HepG2 (cell line): ENCODE measurements at regions of chr19 and their contacts with region 1.

Region 1: DNA sequence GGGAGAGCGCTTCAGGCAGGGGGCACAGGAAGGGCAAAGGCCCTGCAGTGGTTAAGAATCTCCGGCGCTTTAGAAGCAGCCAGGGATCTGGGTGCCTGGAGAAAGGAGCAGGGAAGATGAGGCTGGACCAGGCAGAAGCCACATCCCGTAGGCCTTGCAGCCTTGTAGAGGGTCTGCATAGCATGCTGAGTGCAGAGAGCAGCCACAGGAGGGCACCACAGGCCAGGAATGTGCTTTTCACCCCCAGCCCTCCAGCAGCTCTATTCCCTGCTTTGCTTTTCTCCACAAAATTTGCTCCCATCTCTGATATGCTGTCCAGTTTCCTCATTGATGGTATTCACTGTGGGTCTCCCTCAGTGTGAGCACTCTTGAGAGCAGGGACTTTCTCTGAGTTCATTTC is 5.7 kb downstream of the WDR62 start:
- DNase-seq: no peak
- ATAC-seq: peak; percentile 73
- H3K4me3 ChIP-seq: no peak overlapping the region
- H3K27ac ChIP-seq: peak overlapping the region; percentile 88
- H3K4me1 ChIP-seq: peaks cover 56% of the 10 kb centered on the region
- H3K27me3 ChIP-seq: no peaks in the 10 kb centered on the region; a peak in 1 of 5 replicates
- CTCF ChIP-seq: peak; percentile 86
- EP300 ChIP-seq: no peak
- POLR2A ChIP-seq: no peak
- RAD21 ChIP-seq: peak; percentile 70

Region 2: DNA sequence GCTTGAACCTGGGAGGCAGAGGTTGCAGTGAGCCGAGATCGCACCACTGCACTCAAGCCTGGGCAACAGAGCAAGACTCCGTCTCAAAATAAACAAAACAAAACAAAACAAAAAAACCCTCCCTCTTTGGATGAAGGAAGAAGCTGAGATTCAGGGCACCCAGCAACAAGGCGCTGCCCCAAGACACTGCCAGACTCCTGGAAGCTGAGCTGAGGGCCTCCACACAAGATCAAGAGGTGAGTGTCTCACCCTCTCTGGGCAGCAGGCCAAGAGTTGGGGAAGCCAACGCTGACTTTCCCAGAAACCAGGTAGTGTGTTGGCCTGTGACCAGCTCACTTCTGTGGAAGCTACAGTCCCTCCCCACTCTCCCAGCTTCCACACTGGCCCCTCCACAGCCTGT is 148.6 kb before region 1 on chr19:
- CTCF ChIA-PET with region 1: no interaction called
- POLR2A ChIA-PET with region 1: no interaction called
- in situ Hi-C with region 1: no loop called
- intact Hi-C with region 1: no loop called
- DNase-seq: no peak
- ATAC-seq: no peak
- H3K4me3 ChIP-seq: no peak overlapping the region
- H3K27ac ChIP-seq: no peak overlapping the region
- H3K4me1 ChIP-seq: peaks cover 15% of the 10 kb centered on the region; the same call in 1 of the 2 replicates
- H3K27me3 ChIP-seq: peaks cover 0 to 6% of the 10 kb centered on the region in 2 experiments; a peak in 2 of 5 replicates
- CTCF ChIP-seq: no peak
- EP300 ChIP-seq: no peak
- POLR2A ChIP-seq: no peak
- RAD21 ChIP-seq: no peak

Region 3: DNA sequence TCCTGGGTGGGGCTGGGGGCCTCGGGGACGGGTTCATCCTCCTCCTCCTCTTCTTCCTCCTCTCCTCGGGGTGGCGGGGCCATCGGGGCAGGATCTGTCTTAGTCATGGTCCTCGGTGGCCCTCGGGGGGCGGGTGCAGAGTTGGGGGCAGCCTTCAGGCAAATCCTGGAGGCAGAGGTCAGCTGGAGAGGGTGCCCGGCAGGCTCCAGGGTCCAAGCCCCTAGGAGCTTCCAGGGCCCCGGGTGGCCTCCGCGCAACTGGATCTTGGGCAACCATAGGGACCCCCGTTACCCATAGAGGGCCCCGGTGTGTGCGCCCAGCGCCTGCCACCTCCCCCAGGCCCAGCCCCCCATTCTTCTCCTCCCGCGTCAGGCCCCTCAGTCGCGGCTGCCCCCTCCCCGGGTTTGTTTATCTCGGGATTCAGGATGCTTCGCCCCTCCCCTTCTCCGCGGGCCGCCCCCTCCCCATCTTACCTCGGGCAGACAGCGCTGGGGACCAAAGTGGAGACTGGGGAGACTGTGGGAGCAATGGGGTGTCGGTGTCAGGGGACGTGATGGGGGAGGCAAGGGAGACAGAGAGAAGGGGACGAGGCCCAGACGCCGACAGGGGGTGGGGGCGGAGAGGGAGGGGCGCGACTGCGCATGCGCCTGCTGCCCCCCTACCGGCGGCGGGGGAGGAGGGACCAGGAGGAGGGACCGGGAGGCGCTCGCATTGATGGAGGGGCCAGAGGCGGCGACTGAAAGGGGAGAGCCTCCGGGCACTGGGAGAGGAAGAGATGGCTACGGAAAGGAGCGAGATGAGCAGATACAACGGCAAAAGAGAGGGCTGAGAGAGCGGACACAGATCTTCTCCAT is 28.0 kb before region 1 on chr19 and contains the start of gene CLIP3:
- CTCF ChIA-PET with region 1: no interaction called
- POLR2A ChIA-PET with region 1: no interaction called
- in situ Hi-C with region 1: no loop called
- intact Hi-C with region 1: no loop called
- DNase-seq: no peak
- ATAC-seq: no peak
- H3K4me3 ChIP-seq: no peak within 1 kb of the TSS
- H3K27ac ChIP-seq: no peak within 1 kb of the TSS
- H3K4me1 ChIP-seq: peaks cover 14% of the 10 kb centered on the region
- H3K27me3 ChIP-seq: no peaks in the 10 kb centered on the region
- CTCF ChIP-seq: no peak
- EP300 ChIP-seq: no peak
- POLR2A ChIP-seq: no peak
- RAD21 ChIP-seq: no peak
- total RNA-seq, gene CLIP3: 0.15 TPM in 1 of 2 replicates, not detected in the other

Region 4: GRCh38 chr19:36169084-36169760 is 108.8 kb after region 1 on chr19:
- CTCF ChIA-PET with region 1: interaction called, 15 read pairs
- POLR2A ChIA-PET with region 1: no interaction called
- in situ Hi-C with region 1: no loop called
- intact Hi-C with region 1: loop called (anchors 1 kb)
- DNase-seq: no peak
- ATAC-seq: no peak
- H3K4me3 ChIP-seq: no peak overlapping the region
- H3K27ac ChIP-seq: no peak overlapping the region
- H3K4me1 ChIP-seq: 0 out of 2 replicates have a peak, but pooled peaks cover 10% of the 10 kb centered on the region
- H3K27me3 ChIP-seq: no peaks in the 10 kb centered on the region; a peak in 1 of 5 replicates
- CTCF ChIP-seq: no peak
- EP300 ChIP-seq: no peak
- POLR2A ChIP-seq: no peak
- RAD21 ChIP-seq: no peak